ENCODE measurements at regions of chr14 and their contacts with region 1.

Region 1: DNA sequence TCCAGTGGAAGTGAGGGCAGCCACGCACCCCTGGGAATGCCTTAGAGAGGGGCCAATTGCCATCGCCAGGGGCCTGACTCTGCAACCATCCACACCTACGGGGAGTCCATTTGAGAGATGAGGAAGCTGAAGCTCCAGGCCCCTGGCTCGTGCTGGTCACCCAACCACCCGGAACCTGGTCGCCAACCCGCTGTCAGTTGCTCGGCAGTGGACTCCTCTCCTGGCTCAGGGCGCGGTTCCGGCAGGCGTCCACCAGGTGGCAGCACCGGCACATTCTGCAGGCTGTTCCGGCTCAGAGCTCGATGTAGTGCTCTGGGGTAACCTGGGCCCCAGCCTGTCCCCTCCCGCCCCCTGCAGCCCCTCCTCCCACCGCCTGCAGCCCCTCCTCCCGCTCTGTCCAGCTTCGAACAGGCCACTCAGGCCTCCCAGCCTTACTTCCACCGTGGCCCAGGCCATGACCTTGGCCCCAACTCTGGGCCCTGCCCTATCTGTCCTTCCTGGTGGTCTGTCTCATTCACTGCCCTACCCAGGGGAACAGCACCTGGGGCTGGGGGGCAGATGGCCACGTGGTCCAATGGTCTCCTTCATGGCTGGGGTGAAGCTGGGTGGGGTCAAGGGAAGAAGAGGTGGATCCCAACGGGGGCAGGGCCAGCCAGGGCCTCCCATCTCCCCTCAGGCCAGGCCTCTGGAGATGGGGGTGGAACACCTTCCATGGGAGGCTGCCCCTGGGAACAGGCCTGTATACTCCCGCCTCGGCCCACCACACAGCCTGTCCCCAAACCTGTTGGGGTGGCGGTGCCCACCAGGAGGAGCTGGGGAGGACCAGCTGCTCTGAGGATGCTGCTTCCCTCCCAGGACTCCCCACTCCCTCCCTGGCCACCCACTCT is 15.7 kb downstream of the SIVA1 start:
- DNase-seq: peak; percentile 74 to 86
- ATAC-seq: peak; percentile 87 to 95
- H3K4me3 ChIP-seq: no peak overlapping the region
- H3K27ac ChIP-seq: peak overlapping the region; percentile 55 to 82; a peak in 4 of 6 replicates
- H3K4me1 ChIP-seq: peaks cover 14% of the 10 kb centered on the region
- CTCF ChIP-seq: peak; percentile 82
- EP300 ChIP-seq: no peak
- POLR2A ChIP-seq: no peak
- RAD21 ChIP-seq: peak; percentile 83 to 91

Region 2: DNA sequence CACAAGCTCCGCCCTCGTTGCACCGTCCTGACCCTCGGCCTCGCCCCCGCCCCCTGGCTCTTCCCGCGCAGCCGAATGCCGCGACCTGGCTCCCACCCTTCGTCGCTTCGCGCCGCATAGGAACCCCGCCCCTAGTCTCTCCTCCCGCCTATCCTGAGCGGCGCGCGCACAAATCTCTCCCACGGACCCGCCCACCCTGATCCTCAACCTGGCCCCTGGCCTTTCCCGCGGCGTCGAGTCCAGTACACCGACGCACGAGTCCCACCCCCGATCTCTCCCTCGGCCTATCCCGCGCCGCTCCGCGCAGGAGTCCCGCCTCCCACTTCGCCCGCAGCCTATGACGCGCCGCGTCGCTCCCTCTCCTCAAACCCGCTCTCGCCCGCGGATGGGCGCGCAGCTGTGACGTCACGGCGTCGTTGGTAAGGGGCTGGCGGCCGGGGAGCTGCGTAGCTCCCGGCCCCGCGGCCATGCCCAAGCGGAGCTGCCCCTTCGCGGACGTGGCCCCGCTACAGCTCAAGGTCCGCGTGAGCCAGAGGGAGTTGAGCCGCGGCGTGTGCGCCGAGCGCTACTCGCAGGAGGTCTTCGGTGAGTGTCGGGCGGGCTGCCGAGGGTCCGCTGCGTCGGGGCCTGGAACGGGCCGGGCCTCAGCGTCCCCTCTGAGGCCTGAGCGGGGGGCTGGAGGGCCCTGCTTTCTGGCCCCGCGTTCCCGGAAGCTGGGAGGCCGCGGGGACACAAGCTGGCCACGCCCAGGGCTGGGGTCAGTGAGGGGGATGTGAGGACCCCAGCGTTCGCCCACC is 15.7 kb before region 1 on chr14 and contains the start of gene SIVA1:
- CTCF ChIA-PET with region 1: interaction called, 65 read pairs
- POLR2A ChIA-PET with region 1: no interaction called
- DNase-seq: peak; percentile 98 to 100
- ATAC-seq: peak; percentile 92 to 95
- H3K4me3 ChIP-seq: peak within 1 kb of the TSS; percentile 100
- H3K27ac ChIP-seq: peak within 1 kb of the TSS; percentile 93 to 96
- H3K4me1 ChIP-seq: peaks cover 28% of the 10 kb centered on the region
- CTCF ChIP-seq: no peak
- EP300 ChIP-seq: no peak
- POLR2A ChIP-seq: peak; percentile 86
- RAD21 ChIP-seq: no peak
- polyA plus RNA-seq, gene SIVA1: 90.0 and 94.2 TPM in 2 replicates

Region 3: DNA sequence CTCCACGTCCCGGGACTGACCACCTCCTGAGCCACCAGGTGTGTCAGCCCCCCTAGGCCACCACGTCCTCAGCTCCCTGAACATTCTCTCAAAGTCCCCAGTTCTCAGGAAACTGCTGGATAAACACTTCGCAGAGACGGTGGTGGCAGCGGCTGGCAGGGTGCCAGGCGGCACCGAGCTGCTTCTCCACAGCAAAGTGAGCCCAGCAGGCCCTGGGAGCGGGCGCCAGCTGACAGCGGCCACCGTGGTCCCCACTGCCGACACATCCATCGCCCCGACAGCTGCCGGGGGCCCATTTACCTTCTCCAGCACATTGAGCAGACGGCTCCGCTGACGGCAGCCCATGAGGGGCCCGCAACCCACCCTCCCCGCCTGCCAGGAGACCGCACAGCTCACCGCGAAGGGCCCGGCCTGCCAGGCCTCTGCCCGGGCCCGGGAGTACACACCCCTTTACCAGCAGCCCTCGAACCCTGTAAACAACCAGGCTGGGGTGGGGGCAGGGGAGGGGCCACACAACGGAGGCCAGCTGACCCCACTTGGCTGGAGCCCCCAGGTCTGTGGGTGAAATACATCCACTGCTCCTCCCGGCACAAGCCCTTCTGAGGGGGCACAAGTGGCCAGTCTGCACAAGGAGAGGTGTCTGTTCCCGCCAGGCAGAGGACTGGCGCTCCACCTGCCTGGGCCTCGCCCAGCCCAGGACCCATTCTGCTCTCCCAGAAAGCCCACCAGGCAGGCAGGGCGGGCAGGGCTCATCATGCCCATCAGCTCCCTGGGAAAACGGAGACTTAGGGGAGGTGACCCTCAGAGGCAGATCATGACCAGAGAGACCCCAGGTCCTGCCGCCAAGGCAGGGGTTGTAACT is 16.4 kb after region 1 on chr14:
- CTCF ChIA-PET with region 1: interaction called, 48 read pairs
- POLR2A ChIA-PET with region 1: no interaction called
- DNase-seq: no peak
- ATAC-seq: no peak
- H3K4me3 ChIP-seq: no peak overlapping the region
- H3K27ac ChIP-seq: no peak overlapping the region
- H3K4me1 ChIP-seq: 0 out of 3 replicates have a peak, but pooled peaks cover 10% of the 10 kb centered on the region
- CTCF ChIP-seq: no peak
- EP300 ChIP-seq: no peak
- POLR2A ChIP-seq: no peak
- RAD21 ChIP-seq: no peak

Region 4: GRCh38 chr14:104794641-104795467 is 26.2 kb after region 1 on chr14:
- CTCF ChIA-PET with region 1: interaction called, 48 read pairs
- POLR2A ChIA-PET with region 1: no interaction called
- DNase-seq: no peak
- ATAC-seq: peak; percentile 35 to 56; a peak in 5 of 6 replicates
- H3K4me3 ChIP-seq: peak overlapping the region; percentile 94
- H3K27ac ChIP-seq: peak overlapping the region; percentile 95 to 98
- H3K4me1 ChIP-seq: peaks cover 43% of the 10 kb centered on the region
- CTCF ChIP-seq: no peak
- EP300 ChIP-seq: no peak
- POLR2A ChIP-seq: no peak
- RAD21 ChIP-seq: no peak

Region 5: DNA sequence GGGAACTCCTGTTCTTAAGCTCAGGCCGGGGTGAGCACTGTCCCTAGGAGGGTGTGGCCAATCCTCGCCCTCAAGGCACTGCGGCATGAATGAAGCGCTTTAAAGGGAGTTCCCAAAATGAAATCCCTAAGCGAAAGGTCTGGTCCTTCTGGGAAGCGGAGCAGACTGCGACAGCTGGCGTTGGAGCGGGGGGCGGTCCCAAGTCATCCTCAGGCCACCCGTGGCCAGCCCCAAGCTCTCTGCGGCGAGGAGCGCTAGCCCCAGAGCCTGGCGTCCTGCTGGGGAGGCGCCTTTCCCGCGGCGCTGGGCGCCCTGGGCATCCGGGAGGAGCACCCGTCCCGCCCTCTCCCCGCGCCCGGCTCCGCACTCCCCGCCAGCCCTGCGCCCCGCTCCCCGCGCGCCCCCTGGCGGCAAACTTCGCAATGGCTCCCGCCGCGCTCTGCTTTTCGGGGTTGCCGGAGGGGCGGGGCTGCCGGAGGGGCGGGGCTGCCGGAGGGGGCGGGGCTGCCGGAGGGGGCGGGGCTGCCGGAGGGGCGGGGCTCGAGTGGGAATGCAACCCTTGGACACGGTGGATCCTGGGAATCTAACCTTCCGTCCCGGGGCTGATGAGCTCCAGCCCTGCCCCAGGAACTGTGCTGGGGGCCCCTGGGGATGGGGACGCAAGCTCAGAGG is 57.6 kb after region 1 on chr14:
- CTCF ChIA-PET with region 1: interaction called, 88 read pairs
- POLR2A ChIA-PET with region 1: interaction called, 3 read pairs
- DNase-seq: peak; percentile 82 to 92
- ATAC-seq: peak; percentile 78 to 86
- H3K4me3 ChIP-seq: peak overlapping the region; percentile 45
- H3K27ac ChIP-seq: peak overlapping the region; percentile 54 to 89
- H3K4me1 ChIP-seq: peaks cover 9% of the 10 kb centered on the region; the same call in 2 of the 3 replicates
- CTCF ChIP-seq: peak; percentile 92
- EP300 ChIP-seq: no peak
- POLR2A ChIP-seq: no peak; the same call in 1 of the 2 replicates
- RAD21 ChIP-seq: peak; percentile 63 to 86

Measured in A549 (cell line).